Left ventricle myocardium superior (tissue), 1 donor: ENCODE measurements at regions of chr5 and their contacts with region 1.

Region 1: GRCh38 chr5:5419294-5420210 is 2.9 kb upstream of the ICE1 start:
- DNase-seq: no peak
- ATAC-seq: no peak

Region 2: DNA sequence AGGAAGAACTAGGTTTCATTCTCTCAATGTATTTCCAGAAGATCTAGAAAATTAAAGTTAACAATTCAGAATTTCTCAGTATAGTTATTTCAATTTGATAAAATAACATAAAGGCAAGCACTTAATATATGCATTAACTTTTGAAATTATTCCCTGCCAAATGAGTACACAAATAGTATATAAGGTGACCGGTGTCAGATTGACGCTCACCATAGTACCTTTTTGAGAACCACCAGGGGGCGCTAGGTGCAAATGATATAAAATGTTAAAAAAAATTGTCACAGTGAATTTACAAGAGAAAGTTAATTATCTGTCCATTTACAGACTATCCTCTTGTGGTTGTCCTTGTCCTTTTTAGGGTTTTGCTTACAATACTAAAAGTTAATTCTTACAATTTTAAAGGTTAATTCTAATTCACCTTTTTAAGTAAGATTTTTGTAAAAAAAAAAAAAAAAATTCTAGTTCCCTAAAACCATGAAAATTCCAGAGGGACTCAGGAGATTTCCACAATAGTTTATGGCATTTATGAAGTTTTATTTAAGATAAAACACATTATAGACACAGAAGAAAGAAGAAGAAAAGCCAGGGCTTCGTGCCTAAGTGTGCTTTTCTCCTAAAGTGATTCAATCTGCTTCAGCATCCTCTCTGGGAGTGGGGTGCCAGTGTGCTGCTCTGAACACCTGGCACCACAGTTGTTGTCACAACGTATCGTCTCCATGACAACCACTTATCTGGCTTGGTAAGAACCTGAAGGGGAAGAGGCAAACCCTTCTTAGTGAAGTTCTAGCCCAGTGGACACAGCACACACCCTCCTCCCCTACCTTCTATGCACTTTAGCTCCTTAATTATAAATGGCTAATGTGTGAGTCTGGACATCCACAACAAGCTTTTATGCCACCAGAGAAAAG is 277.7 kb before region 1 on chr5:
- intact Hi-C with region 1: loop called (anchors 10 kb)
- DNase-seq: no peak
- ATAC-seq: peak; percentile 32